ENCODE measurements at regions of chr6 and their contacts with region 1.

Region 1: GRCh38 chr6:40900791-40901190 is 138.2 kb downstream of the UNC5CL start:
- DNase-seq: no peak

Region 2: GRCh38 chr6:40930555-40930954 is 29.8 kb after region 1 on chr6:
- intact Hi-C with region 1: loop called (anchors 2 kb)
- DNase-seq: no peak

Region 3: DNA sequence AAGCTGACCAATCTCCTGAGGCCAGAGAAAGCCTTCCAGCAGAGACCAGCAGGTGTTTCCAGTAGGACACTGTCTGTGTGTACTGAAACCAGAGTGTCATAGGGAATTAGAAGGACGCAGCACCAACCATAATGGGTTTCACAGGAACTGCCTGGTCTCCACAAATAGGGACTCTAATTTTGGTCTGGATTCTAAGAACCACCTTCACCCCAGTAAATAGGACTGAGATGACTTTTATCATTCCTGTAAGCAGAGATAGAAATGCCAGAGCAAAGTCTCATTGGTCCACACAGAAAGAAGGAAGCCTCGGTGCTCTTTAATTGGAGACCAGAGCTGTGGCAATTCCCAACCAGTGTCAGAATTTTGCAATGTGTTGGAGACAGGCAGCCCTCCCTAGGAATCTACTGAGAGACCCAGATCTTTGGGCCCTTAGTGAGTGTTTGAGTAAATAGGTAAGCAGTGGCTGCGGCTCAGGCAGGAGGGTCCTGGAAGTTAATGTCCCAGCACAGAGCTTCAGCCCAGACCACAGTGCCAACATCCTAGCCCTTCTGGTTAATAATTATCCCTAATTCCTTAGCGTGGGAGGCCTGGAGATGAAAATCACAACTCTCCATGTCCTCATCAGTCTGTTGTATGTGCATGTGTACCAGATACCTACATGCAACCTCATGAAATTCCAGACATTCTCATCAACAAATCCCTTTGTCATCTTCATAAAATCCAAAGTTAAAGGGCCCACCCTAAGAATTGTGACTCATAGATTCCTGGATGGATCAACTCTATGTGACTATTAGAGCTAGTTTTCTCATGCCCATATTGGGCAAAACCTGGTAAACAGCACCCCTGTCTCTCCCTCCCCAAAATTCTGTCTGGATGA is 57.1 kb after region 1 on chr6:
- intact Hi-C with region 1: no loop called
- DNase-seq: no peak